OCI-LY7 (cell line): ENCODE measurements at regions of chr15 and their contacts with region 1.

Region 1: GRCh38 chr15:94287794-94288246 is 56.5 kb downstream of the MCTP2 start:
- DNase-seq: peak; percentile 93
- H3K4me3 ChIP-seq: peak overlapping the region; percentile 60
- H3K27ac ChIP-seq: peak overlapping the region; percentile 96
- H3K4me1 ChIP-seq: peaks cover 63% of the 10 kb centered on the region
- CTCF ChIP-seq: peak; percentile 57; the same call in 1 of the 2 replicates

Region 2: DNA sequence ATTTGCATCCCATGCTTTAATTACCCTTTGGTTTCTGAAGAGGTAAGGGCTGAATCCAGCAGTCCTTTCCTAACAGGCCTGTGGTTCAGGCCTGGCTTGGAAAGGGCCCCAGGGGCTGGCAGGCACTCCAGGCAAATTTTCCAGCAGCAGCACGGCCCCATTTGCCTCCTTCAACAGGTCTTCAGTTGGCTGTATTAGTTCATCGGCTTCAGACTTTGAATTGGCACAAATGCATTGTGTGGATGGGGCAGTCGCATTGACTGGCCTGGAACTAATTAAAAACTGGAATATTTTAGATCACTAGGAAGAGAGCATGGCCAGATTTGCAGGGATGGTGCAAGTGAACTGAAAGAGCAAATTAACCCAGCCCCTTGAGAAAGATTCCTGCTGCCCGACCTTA is 264.3 kb before region 1 on chr15:
- CTCF ChIA-PET with region 1: no interaction called
- POLR2A ChIA-PET with region 1: no interaction called
- intact Hi-C with region 1: no loop called
- DNase-seq: no peak
- H3K4me3 ChIP-seq: no peak overlapping the region
- H3K27ac ChIP-seq: no peak overlapping the region
- H3K4me1 ChIP-seq: no peaks in the 10 kb centered on the region
- CTCF ChIP-seq: no peak

Region 3: GRCh38 chr15:94230956-94231722 is 56.7 kb before region 1 on chr15 and contains the start of gene MCTP2:
- CTCF ChIA-PET with region 1: interaction called, 3 read pairs
- POLR2A ChIA-PET with region 1: interaction called, 79 read pairs
- intact Hi-C with region 1: loop called (anchors 1 kb)
- DNase-seq: peak; percentile 95
- H3K4me3 ChIP-seq: peak within 1 kb of the TSS; percentile 86
- H3K27ac ChIP-seq: peak within 1 kb of the TSS; percentile 81
- H3K4me1 ChIP-seq: peaks cover 60% of the 10 kb centered on the region
- CTCF ChIP-seq: peak; percentile 60
- total RNA-seq, gene MCTP2: 73.2 and 75.0 TPM in 2 replicates

Region 4: GRCh38 chr15:94247789-94248638 is 39.8 kb before region 1 on chr15:
- CTCF ChIA-PET with region 1: no interaction called
- POLR2A ChIA-PET with region 1: interaction called, 31 read pairs
- intact Hi-C with region 1: no loop called
- DNase-seq: no peak
- H3K4me3 ChIP-seq: no peak overlapping the region
- H3K27ac ChIP-seq: no peak overlapping the region
- H3K4me1 ChIP-seq: peaks cover 35% of the 10 kb centered on the region
- CTCF ChIP-seq: no peak

Region 5: DNA sequence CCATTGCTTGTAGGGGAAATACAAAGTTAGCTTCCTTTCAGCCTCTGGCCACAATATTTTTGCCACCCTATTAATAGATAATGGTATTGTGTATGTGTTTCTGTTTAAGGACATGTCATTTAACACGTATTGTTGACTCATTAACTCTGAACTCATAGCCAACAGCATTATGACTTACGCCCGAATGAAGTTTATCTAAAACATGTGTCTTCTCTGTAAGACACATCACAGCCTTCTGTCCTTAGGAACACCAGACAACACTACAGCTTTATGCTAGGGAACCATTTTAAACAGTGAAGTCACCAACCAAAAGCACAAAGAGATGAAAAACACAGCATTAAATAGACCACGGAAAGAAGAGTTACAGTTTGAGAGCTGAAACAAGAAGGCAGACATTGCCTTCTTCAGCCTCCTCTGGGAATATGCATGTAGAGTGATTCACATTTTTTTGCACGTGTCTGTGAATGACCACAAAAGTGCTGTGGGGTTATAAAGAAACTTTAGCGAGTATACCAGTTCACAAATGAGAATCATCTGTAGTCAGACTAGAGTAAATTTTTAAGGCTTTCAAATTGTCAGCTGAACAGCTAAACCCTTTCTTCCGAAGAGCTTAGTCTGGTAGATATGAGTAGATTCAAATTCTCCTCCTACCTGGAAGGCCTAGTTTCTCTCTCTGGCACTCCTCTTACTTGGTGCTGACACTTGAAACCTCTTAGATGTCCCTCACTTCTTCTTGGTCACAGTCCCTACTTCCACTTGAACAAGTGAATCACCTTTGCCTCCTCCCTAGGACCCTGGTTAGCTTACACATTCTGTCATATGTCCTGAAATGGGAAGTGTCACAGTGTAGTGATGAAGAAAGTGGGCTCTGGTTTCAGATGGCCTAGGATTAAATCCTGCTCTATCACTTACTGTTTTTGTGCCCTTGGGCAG is 24.2 kb before region 1 on chr15:
- CTCF ChIA-PET with region 1: interaction called, 6 read pairs
- POLR2A ChIA-PET with region 1: interaction called, 65 read pairs
- intact Hi-C with region 1: loop called (anchors 1 kb)
- DNase-seq: peak; percentile 27
- H3K4me3 ChIP-seq: peak overlapping the region; percentile 15
- H3K27ac ChIP-seq: peak overlapping the region; percentile 66
- H3K4me1 ChIP-seq: peaks cover 87% of the 10 kb centered on the region
- CTCF ChIP-seq: no peak

Region 6: GRCh38 chr15:94277485-94277884 is 10.3 kb before region 1 on chr15:
- CTCF ChIA-PET with region 1: no interaction called
- POLR2A ChIA-PET with region 1: interaction called, 18 read pairs
- intact Hi-C with region 1: no loop called
- DNase-seq: no peak
- H3K4me3 ChIP-seq: no peak overlapping the region
- H3K27ac ChIP-seq: no peak overlapping the region
- H3K4me1 ChIP-seq: peaks cover 64% of the 10 kb centered on the region
- CTCF ChIP-seq: no peak

Region 7: GRCh38 chr15:94324117-94324826 is 36.5 kb after region 1 on chr15:
- CTCF ChIA-PET with region 1: interaction called, 7 read pairs
- POLR2A ChIA-PET with region 1: interaction called, 18 read pairs
- intact Hi-C with region 1: loop called (anchors 1 kb)
- DNase-seq: peak; percentile 86
- H3K4me3 ChIP-seq: no peak overlapping the region
- H3K27ac ChIP-seq: peak overlapping the region; percentile 12
- H3K4me1 ChIP-seq: peaks cover 24% of the 10 kb centered on the region
- CTCF ChIP-seq: peak; percentile 98

Region 8: DNA sequence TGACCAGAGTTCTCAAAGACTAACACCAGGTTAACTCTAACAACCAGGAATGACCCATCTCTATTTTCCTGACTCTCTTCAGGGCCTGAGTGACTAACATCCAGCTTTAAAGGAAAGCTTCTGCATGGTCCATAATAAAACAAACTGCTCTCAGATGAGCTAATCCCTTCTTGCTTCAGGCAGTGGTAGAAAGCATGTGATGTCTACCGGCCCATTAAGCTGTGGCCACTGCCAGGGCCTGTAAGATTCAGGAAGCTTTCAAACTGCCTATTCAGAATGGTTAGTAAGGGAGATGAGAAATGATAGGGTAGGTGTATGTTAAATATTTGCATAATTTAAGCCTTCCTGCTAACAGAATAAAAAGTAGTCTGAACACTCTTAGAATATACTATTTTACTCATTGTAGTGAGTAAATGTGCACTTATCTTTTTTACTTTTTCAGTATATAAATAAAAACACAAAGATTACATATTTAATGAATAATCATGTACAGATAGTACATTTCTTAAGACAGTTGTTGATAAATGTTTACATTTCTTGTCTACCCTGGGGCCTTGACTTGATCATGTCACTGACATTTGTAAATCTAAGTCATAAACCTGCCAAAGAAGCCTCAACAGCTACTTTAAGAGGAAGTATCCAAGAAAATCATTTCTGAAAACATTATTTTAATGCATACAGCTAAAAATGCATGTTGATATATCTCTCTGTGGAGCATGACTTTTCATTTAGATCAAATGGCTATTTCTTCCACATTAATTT is 165.6 kb after region 1 on chr15:
- CTCF ChIA-PET with region 1: no interaction called
- POLR2A ChIA-PET with region 1: no interaction called
- intact Hi-C with region 1: no loop called
- DNase-seq: no peak
- H3K4me3 ChIP-seq: no peak overlapping the region
- H3K27ac ChIP-seq: no peak overlapping the region
- H3K4me1 ChIP-seq: no peaks in the 10 kb centered on the region
- CTCF ChIP-seq: no peak